RWPE1 (cell line): ENCODE measurements at regions of chr16 and their contacts with region 1.

Region 1: DNA sequence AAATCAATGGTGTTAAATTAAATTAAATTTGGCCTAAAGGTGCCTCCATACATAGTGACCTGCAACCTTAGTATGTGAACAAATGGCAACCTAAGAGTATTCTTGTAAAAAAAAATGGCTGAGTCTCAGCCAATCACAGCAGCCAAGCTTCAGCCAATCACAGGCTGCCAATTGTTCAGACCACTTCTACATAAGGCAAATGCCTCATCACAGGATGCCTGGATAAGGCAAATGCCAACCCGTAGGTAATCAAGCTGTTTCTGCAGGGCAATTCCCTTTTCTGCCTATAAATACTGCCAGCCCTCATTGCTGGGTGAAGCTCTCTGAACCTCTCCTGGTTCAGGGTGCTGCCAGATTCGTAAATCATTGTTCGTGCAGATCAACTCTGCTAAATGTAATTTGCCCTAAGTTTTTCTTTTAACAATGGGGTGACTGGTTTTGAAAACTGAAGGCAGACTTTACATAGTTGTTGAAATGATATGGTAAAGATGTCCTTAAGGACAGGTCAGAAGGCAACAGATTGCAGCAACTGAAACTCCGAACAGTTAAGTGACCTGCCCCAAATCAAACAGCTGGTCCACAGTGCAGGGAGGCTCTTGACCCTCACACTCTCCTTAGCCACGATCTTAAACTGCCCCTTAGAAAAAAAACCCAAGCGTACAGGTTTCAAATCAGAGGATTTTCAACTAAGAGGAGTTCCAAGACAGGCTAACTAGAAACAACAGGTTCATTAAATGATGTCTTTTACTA is 50.3 kb downstream of the N4BP1 start:
- DNase-seq: no peak
- H3K27ac ChIP-seq: no peak overlapping the region
- CTCF ChIP-seq: no peak

Region 2: DNA sequence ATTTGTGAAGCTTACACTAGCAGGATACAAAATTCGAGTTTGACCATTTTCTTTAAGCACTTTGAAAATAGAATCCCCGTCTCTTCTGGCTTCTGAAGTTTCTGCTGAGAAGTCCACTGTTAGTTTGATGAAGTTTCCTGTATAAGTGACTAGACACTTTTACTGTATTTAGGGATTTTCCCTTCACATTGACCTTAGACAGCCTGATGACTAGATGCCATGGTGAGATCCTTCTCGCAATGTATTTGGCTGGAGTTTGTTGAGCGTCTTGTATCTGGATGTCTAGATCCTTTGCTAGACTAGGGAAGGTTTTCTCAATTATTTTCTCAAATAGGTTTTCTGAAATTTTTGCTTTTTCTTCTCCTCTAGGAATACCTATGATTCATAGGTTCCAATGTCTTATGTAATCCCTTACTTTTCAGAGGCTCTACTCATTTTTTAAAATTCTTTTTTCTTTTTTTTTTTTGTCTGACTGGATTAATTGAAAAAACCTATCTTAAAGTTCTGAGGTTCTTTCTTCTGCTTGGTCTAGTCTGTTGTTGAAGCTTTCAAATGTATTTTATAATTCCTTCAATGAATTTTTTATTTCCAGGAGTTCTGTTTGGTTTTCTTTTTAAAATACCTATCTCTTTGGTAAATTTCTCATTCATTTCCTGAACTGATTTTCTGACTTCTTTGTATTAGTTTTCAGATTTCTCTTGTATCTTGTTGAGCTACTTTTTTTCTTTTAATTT is 248.6 kb before region 1 on chr16:
- CTCF ChIA-PET with region 1: no interaction called
- POLR2A ChIA-PET with region 1: no interaction called
- DNase-seq: no peak
- H3K27ac ChIP-seq: no peak overlapping the region
- CTCF ChIP-seq: no peak

Region 3: DNA sequence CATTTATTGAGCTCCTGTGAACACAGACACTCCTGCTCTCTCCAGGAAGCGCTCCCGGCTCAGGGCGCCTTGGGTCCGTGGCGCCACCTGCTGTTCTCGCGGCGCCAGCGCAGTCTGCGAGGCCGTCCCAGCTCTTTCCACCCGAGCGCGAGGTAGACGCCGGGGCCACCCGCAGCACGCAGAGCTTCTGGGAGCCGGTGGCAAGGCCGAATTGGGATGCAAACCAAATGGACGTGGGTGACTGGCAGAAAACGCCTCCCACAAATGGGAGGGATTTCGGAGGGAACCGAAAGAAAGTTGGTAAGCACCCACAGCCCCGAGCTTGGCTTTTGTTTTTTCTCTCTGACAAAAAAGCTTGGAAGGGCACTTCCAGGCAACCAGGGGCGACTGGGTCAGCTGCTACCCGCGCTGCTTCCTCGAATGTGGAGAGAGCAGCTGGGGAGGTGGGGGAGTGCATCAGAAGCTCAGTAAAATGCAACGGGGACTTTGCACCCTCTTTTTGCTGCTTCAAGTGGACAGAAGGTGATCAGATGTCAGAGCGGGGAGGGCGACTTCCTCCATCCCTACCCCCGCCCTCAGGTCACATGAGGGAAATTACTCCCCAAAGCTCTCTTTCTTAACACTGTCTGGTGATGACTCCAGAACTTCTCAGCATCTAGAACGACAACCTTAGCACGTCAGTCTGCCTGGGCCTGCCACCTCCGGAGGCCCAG is 63.8 kb after region 1 on chr16:
- CTCF ChIA-PET with region 1: interaction called, 11 read pairs
- POLR2A ChIA-PET with region 1: no interaction called
- DNase-seq: peak; percentile 76
- H3K27ac ChIP-seq: peak overlapping the region; percentile 75
- CTCF ChIP-seq: peak; percentile 98